Heart right ventricle (tissue), 16 donors: ENCODE measurements at regions of chr16 and their contacts with region 1.

Region 1: GRCh38 chr16:71961066-71962039 is 38.8 kb downstream of the PKD1L3 start:
- DNase-seq: peak; percentile 81 to 88
- ATAC-seq: peak; percentile 81 to 99 (median 94)
- H3K4me3 ChIP-seq: no peak overlapping the region
- H3K27ac ChIP-seq: no peak overlapping the region
- H3K4me1 ChIP-seq: peaks cover 0 to 14% (median 0%) of the 10 kb centered on the region in 9 donors
- H3K27me3 ChIP-seq: no peaks in the 10 kb centered on the region
- CTCF ChIP-seq: peak; percentile 66 to 90 (median 83)

Region 2: GRCh38 chr16:71762186-71762585 is 199.2 kb before region 1 on chr16:
- intact Hi-C with region 1: loop called in 1 of 10 experiments (anchors 10 kb)
- DNase-seq: no peak
- ATAC-seq: no peak
- H3K4me3 ChIP-seq: no peak overlapping the region
- H3K27ac ChIP-seq: no peak overlapping the region
- H3K4me1 ChIP-seq: peaks cover 0 to 16% (median 9%) of the 10 kb centered on the region in 9 donors
- H3K27me3 ChIP-seq: no peaks in the 10 kb centered on the region
- CTCF ChIP-seq: no peak